ENCODE measurements at regions of chr15 and their contacts with region 1.

Region 1: DNA sequence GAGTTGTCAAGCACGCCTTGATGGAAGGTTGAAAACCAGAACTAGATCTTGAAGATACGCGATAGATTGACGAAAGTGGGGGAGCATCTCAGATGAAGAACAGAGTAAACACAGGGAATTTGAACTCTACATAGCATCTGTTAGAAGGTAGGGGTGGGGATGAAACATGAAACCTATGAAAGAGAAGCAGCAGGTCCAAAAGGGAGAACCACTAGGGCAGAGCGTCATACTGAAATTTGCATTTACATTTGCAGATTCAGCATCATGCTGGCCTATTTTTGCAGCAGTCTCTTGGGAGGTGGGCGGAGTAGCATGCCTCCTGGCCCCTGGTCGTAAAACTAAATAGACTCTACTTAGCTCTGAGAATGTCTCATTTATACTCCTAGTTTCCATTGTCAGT is 46.1 kb upstream of the RASGRP1 start:
- DNase-seq: peak; percentile 20
- ATAC-seq: peak; percentile 98
- H3K4me3 Mint-ChIP-seq: peak overlapping the region; percentile 11
- H3K27ac Mint-ChIP-seq: peak overlapping the region; percentile 13
- H3K4me1 Mint-ChIP-seq: peaks cover 35% of the 10 kb centered on the region
- H3K27me3 Mint-ChIP-seq: no peaks in the 10 kb centered on the region
- CTCF ChIP-seq: no peak

Region 2: DNA sequence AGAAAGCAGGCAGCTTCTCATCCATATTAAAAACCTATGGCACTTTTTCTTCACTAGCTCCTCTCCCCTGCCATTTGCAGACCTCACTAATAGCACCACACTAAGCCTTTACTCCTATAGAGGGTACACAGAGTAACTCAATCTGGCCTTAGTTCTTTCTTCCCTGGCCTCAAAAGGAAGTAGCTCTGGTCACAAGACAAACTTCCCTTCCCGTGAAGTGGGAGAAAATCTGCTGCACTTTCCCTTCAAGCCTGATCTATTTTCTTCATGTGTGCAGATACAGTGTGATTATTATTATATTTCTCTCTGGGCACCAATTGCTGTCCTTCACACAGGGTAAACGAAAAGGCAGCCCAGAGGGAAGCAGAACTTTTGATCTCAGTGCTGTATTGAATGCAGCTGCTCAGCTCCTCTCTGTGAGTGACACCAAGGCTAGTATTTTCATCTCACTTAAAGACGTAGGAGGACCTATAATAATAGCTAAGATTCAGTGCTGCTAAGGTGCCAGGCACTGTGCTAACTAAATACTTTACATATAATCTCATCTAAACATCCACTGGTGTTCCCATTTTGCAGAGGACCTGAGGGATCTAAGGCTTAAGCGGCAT is 15.8 kb after region 1 on chr15:
- CTCF ChIA-PET with region 1: no interaction called
- POLR2A ChIA-PET with region 1: no interaction called
- intact Hi-C with region 1: loop called (anchors 2 kb)
- DNase-seq: no peak
- ATAC-seq: no peak
- H3K4me3 Mint-ChIP-seq: no peak overlapping the region
- H3K27ac Mint-ChIP-seq: no peak overlapping the region
- H3K4me1 Mint-ChIP-seq: peaks cover 16% of the 10 kb centered on the region
- H3K27me3 Mint-ChIP-seq: no peaks in the 10 kb centered on the region
- CTCF ChIP-seq: no peak

Region 3: DNA sequence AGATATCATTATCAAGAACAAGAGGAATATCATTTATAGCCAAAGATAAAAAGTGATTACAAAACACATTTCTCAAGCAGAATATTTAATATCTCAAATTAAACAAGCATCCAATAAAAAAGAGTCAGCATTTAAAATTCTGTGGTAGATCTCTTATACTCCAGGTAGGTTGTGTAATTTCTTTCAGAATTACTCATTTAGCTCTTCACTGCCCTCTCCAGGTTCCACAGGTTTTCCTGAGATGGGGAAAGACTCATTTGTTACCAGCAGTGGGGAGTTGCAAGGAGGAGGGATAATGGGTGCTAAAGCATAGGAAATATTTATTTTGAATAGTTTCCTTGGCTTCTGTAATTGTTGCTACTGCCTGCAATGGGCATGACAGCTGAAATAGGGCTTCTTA is 36.9 kb after region 1 on chr15:
- CTCF ChIA-PET with region 1: interaction called, 3 read pairs
- POLR2A ChIA-PET with region 1: interaction called, 11 read pairs
- intact Hi-C with region 1: loop called (anchors 1 kb)
- DNase-seq: no peak
- ATAC-seq: no peak
- H3K4me3 Mint-ChIP-seq: no peak overlapping the region
- H3K27ac Mint-ChIP-seq: no peak overlapping the region
- H3K4me1 Mint-ChIP-seq: peaks cover 60% of the 10 kb centered on the region
- H3K27me3 Mint-ChIP-seq: no peaks in the 10 kb centered on the region
- CTCF ChIP-seq: no peak

Region 4: DNA sequence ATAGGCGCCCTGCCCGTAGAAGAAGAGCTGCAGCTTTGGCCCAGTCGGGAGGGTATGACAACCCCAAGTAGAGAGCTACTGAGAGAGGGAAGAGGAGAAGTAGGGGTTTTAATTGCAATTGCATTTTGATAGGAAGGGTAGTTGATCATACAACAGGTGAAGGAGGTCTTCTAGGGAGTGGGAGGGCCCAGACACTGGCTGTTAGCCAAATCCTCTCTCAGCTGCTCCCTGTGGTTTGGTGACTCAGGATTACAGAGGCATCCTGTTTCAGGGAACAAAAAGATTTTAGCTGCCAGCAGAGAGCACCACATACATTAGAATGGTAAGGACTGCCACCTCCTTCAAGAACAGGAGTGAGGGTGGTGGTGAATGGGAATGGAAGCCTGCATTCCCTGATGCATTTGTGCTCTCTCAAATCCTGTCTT is 561.2 kb after region 1 on chr15:
- CTCF ChIA-PET with region 1: no interaction called
- POLR2A ChIA-PET with region 1: no interaction called
- intact Hi-C with region 1: no loop called
- DNase-seq: no peak
- ATAC-seq: no peak
- H3K4me3 Mint-ChIP-seq: no peak overlapping the region
- H3K27ac Mint-ChIP-seq: no peak overlapping the region
- H3K4me1 Mint-ChIP-seq: no peaks in the 10 kb centered on the region
- H3K27me3 Mint-ChIP-seq: peaks cover 2% of the 10 kb centered on the region
- CTCF ChIP-seq: no peak